ENCODE measurements at regions of chr7 and their contacts with region 1.

Region 1: DNA sequence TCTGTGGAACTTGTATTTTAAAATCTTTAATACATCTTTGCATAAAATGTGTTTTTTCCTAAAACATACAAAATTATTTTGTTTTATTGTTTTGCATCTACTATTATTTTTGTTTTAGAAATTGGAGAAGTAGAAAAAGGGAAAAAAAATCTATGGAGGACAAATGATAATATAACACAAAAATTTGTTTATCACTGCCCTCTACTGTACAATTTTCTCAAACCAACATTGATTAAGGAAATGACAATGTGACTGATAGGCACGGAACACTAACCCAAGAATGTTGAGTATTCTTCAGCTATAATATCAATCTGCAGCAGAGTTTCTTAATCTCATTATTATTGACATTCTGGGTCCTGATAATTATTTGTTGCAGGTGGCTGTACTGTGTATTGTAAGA is 9.5 kb upstream of the ING3 start:
- DNase-seq: peak; percentile 50
- ATAC-seq: peak; percentile 49
- H3K4me3 ChIP-seq: no peak overlapping the region
- H3K27ac ChIP-seq: no peak overlapping the region
- H3K4me1 ChIP-seq: peaks cover 7% of the 10 kb centered on the region; the same call in 1 of the 2 replicates
- H3K27me3 ChIP-seq: no peaks in the 10 kb centered on the region
- CTCF ChIP-seq: peak; percentile 64

Region 2: GRCh38 chr7:119711104-119711503 is 1230.0 kb before region 1 on chr7:
- CTCF ChIA-PET with region 1: no interaction called
- POLR2A ChIA-PET with region 1: no interaction called
- intact Hi-C with region 1: no loop called
- DNase-seq: no peak
- ATAC-seq: no peak
- H3K4me3 ChIP-seq: no peak overlapping the region
- H3K27ac ChIP-seq: no peak overlapping the region
- H3K4me1 ChIP-seq: no peaks in the 10 kb centered on the region
- H3K27me3 ChIP-seq: no peaks in the 10 kb centered on the region
- CTCF ChIP-seq: no peak

Region 3: GRCh38 chr7:120725376-120726039 is 215.6 kb before region 1 on chr7:
- CTCF ChIA-PET with region 1: no interaction called
- POLR2A ChIA-PET with region 1: no interaction called
- intact Hi-C with region 1: loop called (anchors 5 kb)
- DNase-seq: peak; percentile 64
- ATAC-seq: no peak
- H3K4me3 ChIP-seq: peak overlapping the region; percentile 6; the same call in 1 of the 2 replicates
- H3K27ac ChIP-seq: no peak overlapping the region
- H3K4me1 ChIP-seq: no peaks in the 10 kb centered on the region
- H3K27me3 ChIP-seq: no peaks in the 10 kb centered on the region
- CTCF ChIP-seq: peak; percentile 79

Region 4: GRCh38 chr7:120792091-120792860 is 148.8 kb before region 1 on chr7:
- CTCF ChIA-PET with region 1: interaction called, 4 read pairs
- POLR2A ChIA-PET with region 1: no interaction called
- intact Hi-C with region 1: loop called (anchors 1 kb)
- DNase-seq: peak; percentile 72
- ATAC-seq: peak; percentile 93
- H3K4me3 ChIP-seq: no peak overlapping the region
- H3K27ac ChIP-seq: no peak overlapping the region
- H3K4me1 ChIP-seq: no peaks in the 10 kb centered on the region
- H3K27me3 ChIP-seq: no peaks in the 10 kb centered on the region
- CTCF ChIP-seq: peak; percentile 92

Region 5: GRCh38 chr7:120805636-120806388 is 135.3 kb before region 1 on chr7:
- CTCF ChIA-PET with region 1: no interaction called
- POLR2A ChIA-PET with region 1: no interaction called
- intact Hi-C with region 1: loop called (anchors 1 kb)
- DNase-seq: peak; percentile 72
- ATAC-seq: peak; percentile 61
- H3K4me3 ChIP-seq: no peak overlapping the region
- H3K27ac ChIP-seq: no peak overlapping the region
- H3K4me1 ChIP-seq: no peaks in the 10 kb centered on the region
- H3K27me3 ChIP-seq: no peaks in the 10 kb centered on the region
- CTCF ChIP-seq: peak; percentile 83

Region 6: DNA sequence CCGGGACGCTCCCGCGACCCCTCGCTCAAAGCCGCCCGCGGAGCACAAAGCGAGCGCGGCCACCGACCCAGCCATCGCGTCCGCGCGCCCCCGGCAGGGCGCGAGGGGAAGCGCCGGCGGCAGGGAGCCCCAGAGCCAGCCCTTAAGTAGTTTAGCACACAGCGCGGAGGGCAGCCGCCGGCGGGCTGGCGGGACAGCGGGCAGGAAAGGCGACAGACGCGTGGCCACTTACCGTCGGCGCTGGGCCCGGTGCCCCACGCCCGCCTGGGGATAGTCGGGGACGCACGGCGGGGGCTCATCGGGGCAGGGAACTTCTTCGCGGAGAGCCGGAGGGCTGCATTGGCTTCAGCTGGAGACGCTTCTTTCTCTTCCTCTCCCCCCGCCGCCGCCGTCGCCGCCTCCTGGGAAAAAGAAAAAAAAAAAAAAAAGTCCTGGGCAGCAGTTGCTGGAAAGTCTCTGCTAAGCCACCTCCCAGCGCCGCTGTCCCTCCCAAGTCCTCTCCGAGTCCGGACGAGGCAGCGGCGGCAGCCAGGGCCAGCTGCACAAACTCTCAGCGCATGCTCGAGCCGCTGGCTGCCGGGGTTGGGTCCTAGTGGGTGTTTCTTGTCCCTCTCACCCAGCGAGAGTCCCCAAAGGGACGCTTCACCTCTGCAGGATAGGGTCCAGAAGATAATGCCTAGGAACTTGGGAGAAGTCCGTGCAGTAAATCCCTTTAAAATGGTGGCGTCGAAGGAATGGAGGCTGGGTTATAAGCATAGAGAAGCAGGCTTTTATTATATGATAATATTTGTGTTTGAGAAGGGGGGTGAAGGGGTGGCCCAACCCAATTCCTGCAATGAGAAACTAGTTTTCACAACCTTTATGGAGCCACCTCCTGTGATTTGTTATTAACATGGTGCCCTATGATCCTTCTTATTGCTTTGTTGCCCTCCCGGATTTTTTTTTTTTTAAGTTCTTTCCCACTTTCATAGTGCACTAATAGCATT is 83.2 kb before region 1 on chr7 and contains the start of gene TSPAN12:
- CTCF ChIA-PET with region 1: no interaction called
- POLR2A ChIA-PET with region 1: no interaction called
- intact Hi-C with region 1: loop called (anchors 1 kb)
- DNase-seq: peak; percentile 70
- ATAC-seq: peak; percentile 85
- H3K4me3 ChIP-seq: peak within 1 kb of the TSS; percentile 88
- H3K27ac ChIP-seq: peak within 1 kb of the TSS; percentile 48
- H3K4me1 ChIP-seq: peaks cover 8% of the 10 kb centered on the region
- H3K27me3 ChIP-seq: no peaks in the 10 kb centered on the region
- CTCF ChIP-seq: peak; percentile 57
- total RNA-seq, gene TSPAN12: 7.2 and 8.3 TPM in 2 replicates

Region 7: GRCh38 chr7:120955577-120956149 is 14.6 kb after region 1 on chr7:
- CTCF ChIA-PET with region 1: no interaction called
- POLR2A ChIA-PET with region 1: no interaction called
- intact Hi-C with region 1: no loop called
- DNase-seq: no peak
- ATAC-seq: no peak
- H3K4me3 ChIP-seq: no peak overlapping the region
- H3K27ac ChIP-seq: no peak overlapping the region
- H3K4me1 ChIP-seq: peaks cover 5% of the 10 kb centered on the region; the same call in 1 of the 2 replicates
- H3K27me3 ChIP-seq: no peaks in the 10 kb centered on the region
- CTCF ChIP-seq: no peak